A673 (cell line): ENCODE measurements at regions of chr14 and their contacts with region 1.

Region 1: GRCh38 chr14:32588448-32589320 is 259.6 kb downstream of the AKAP6 start:
- DNase-seq: peak; percentile 70
- H3K4me3 ChIP-seq: no peak overlapping the region
- H3K27ac ChIP-seq: no peak overlapping the region
- H3K4me1 ChIP-seq: peaks cover 10% of the 10 kb centered on the region
- H3K27me3 ChIP-seq: no peaks in the 10 kb centered on the region
- CTCF ChIP-seq: peak; percentile 90

Region 2: GRCh38 chr14:32697704-32698103 is 109.0 kb after region 1 on chr14:
- CTCF ChIA-PET with region 1: no interaction called
- POLR2A ChIA-PET with region 1: no interaction called
- intact Hi-C with region 1: loop called (anchors 5 kb)
- DNase-seq: peak; percentile 79
- H3K4me3 ChIP-seq: peak overlapping the region; percentile 3
- H3K27ac ChIP-seq: peak overlapping the region; percentile 44
- H3K4me1 ChIP-seq: peaks cover 49% of the 10 kb centered on the region
- H3K27me3 ChIP-seq: no peaks in the 10 kb centered on the region
- CTCF ChIP-seq: no peak

Region 3: DNA sequence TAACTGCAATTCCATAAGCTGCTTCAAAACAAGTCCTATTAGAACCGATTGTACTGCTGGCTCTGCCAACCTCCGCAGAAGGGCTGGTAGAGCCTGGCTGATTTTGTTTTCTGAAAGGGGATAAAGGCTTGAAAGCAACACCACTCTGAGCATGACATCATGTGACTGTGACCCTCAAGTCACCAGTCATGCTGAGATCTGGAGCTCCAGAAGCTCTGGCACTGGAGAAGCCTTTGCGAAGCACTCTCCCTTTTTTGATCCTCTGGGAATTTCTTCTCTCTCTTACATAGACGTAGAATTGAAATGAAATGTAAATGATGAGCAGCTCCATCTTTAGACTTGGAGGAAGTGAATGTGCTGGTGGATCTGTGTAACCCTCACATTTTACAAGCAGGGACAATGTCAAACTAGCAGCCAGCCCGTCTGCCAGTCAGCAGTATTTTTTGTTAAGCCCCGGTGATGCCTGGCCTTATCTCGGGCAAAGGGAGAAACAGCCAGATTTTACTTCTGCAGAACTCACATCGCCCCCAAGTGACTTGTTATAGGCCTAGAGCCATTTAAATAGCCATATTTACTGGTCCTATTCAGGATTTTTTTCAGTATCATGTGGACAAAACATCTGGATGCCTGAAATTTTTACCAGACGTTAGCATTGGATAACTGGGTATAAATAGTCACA is 237.9 kb after region 1 on chr14:
- CTCF ChIA-PET with region 1: interaction called, 3 read pairs
- POLR2A ChIA-PET with region 1: no interaction called
- intact Hi-C with region 1: loop called (anchors 2 kb)
- DNase-seq: peak; percentile 71
- H3K4me3 ChIP-seq: no peak overlapping the region
- H3K27ac ChIP-seq: no peak overlapping the region
- H3K4me1 ChIP-seq: peaks cover 13% of the 10 kb centered on the region
- H3K27me3 ChIP-seq: no peaks in the 10 kb centered on the region
- CTCF ChIP-seq: peak; percentile 53